ENCODE measurements at regions of chr17 and their contacts with region 1.

Region 1: DNA sequence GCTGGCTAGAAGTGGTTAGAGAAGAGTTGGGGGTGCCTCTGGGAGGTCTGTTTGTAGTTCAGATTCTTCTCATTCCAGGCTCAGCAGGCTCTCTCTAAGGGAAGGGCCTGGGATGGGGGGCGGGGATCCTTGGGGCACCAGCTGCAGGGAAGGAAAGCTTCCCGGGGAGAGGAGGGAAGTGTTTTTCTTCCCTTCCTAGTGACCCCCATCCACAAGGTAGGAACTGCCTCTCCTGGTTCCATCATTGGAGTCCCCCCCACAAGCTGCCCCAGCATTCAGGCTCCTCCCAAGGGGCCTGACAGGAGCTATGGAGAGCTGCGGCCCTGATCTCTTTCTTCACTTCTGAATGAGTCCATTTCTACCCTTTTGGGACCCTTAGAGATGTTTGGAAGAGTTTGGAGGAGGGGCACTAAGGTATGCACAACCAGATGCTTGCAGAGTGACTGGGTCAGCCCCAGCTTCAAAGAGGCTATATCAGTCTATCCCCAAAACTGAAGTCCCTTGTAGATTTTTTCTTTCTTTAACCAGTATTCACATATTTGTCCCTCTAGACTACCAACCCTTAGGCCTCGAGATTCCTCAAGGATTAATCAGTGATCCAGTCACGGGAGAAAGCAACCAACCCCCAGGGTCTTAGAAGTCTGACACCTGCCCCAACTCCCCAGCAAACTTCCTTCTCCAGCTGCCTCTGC is 13.9 kb upstream of the FZD2 start:
- DNase-seq: peak; percentile 86
- H3K4me3 ChIP-seq: peak overlapping the region; percentile 35
- CTCF ChIP-seq: no peak

Region 2: DNA sequence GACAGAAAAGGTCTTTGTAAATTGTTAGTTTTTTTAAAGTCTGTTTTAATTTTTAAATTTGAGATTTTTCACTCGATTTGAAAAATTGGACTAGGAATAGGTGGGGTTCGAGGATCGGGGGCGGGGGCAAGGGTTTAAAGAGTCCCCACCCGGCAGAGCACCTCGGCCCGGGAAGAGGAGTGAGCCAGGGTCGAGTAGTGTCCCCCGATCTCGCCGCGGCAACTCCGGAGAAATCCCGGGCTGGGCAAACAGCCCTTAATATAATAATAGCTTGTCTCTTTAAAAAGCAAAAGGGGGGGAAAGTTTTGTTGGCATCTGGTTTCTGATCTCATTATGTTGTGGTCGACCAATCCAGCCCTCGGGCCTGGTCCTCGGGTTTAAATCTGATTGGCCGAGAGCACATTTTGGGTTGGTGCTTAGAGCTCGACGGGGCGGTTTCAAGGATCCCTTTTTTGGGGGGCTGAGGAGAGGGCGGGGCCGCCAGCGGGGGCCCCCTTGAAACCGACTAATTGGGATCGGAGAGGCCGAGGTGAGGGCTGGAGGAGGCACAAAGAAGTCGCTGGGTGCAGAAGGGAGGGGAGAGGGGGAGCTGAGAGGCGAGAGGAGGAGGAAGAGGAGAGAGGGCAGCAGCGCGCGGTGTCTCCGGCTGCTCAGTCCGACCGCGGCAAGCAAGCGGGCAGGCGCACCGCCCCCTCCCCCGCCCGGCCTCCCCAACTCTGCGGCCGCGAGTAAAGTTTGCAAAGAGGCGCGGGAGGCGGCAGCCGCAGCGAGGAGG is 13.7 kb after region 1 on chr17 and contains the start of gene FZD2:
- CTCF ChIA-PET with region 1: interaction called, 13 read pairs
- POLR2A ChIA-PET with region 1: interaction called, 42 read pairs
- DNase-seq: peak; percentile 94
- H3K4me3 ChIP-seq: peak within 1 kb of the TSS; percentile 90
- CTCF ChIP-seq: no peak

Measured in AG04449 (cell line).